ENCODE measurements at regions of chr15 and their contacts with region 1.

Region 1: DNA sequence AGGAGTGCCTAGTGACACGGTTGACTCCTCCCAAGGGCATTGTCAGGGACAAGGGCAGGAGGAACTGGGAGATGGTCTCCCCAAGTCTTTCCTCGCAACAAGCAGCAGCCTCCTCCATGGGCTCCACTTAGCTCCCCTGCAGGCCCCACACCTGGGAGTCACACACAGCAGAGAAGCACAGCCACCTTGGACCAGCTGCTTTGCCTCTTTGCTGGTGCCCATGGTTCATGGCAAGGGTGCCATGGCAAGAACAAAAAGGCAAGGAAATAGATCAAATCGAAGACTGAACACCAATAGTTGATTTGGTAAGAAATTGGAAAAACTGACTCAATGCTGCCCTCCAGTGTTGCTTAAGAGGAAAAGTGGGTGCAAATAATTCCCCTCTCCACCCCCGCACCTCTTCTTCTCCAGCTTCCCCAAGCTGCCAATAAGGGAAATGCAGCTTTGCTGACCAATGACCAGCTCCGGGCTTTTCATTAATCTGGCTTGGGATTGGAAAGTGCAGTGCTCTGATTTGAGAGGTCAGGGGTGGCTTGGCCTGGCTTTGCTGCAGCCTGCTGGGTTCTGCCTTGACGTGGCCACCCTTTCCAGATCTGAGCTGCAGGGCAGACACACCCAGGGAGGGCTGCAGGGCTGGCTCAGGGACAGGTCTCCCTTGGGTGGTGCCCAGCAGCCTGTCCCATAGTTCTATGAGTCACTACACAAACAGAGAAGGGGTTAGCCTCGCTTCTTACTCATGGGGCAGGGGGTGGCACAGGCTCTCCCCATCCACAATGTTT is 162.0 kb downstream of the KLF13 start:
- DNase-seq: peak; percentile 88
- H3K4me3 Mint-ChIP-seq: no peak overlapping the region
- H3K27ac Mint-ChIP-seq: peak overlapping the region; percentile 57
- H3K4me1 Mint-ChIP-seq: peaks cover 23% of the 10 kb centered on the region
- H3K27me3 Mint-ChIP-seq: no peaks in the 10 kb centered on the region
- CTCF ChIP-seq: peak; percentile 90

Region 2: GRCh38 chr15:31128919-31129768 is 359.5 kb before region 1 on chr15:
- CTCF ChIA-PET with region 1: interaction called, 20 read pairs
- POLR2A ChIA-PET with region 1: no interaction called
- intact Hi-C with region 1: loop called (anchors 5 kb)
- DNase-seq: peak; percentile 61
- H3K4me3 Mint-ChIP-seq: no peak overlapping the region
- H3K27ac Mint-ChIP-seq: no peak overlapping the region
- H3K4me1 Mint-ChIP-seq: no peaks in the 10 kb centered on the region
- H3K27me3 Mint-ChIP-seq: no peaks in the 10 kb centered on the region
- CTCF ChIP-seq: peak; percentile 92

Region 3: GRCh38 chr15:31215490-31216214 is 273.0 kb before region 1 on chr15:
- CTCF ChIA-PET with region 1: interaction called, 10 read pairs
- POLR2A ChIA-PET with region 1: interaction called, 4 read pairs
- intact Hi-C with region 1: loop called (anchors 1 kb)
- DNase-seq: peak; percentile 94
- H3K4me3 Mint-ChIP-seq: peak overlapping the region; percentile 68
- H3K27ac Mint-ChIP-seq: peak overlapping the region; percentile 57
- H3K4me1 Mint-ChIP-seq: peaks cover 16% of the 10 kb centered on the region
- H3K27me3 Mint-ChIP-seq: no peaks in the 10 kb centered on the region
- CTCF ChIP-seq: peak; percentile 80

Region 4: GRCh38 chr15:31365655-31366127 is 122.9 kb before region 1 on chr15:
- CTCF ChIA-PET with region 1: interaction called, 182 read pairs
- POLR2A ChIA-PET with region 1: interaction called, 39 read pairs
- intact Hi-C with region 1: loop called (anchors 1 kb)
- DNase-seq: peak; percentile 92
- H3K4me3 Mint-ChIP-seq: peak overlapping the region; percentile 76
- H3K27ac Mint-ChIP-seq: peak overlapping the region; percentile 86
- H3K4me1 Mint-ChIP-seq: peaks cover 57% of the 10 kb centered on the region
- H3K27me3 Mint-ChIP-seq: no peaks in the 10 kb centered on the region
- CTCF ChIP-seq: peak; percentile 49

Region 5: GRCh38 chr15:31442203-31443111 is 46.2 kb before region 1 on chr15:
- CTCF ChIA-PET with region 1: interaction called, 116 read pairs
- POLR2A ChIA-PET with region 1: interaction called, 5 read pairs
- intact Hi-C with region 1: loop called (anchors 1 kb)
- DNase-seq: peak; percentile 39
- H3K4me3 Mint-ChIP-seq: no peak overlapping the region
- H3K27ac Mint-ChIP-seq: peak overlapping the region; percentile 50
- H3K4me1 Mint-ChIP-seq: peaks cover 21% of the 10 kb centered on the region
- H3K27me3 Mint-ChIP-seq: no peaks in the 10 kb centered on the region
- CTCF ChIP-seq: peak; percentile 10

Region 6: GRCh38 chr15:31472636-31473384 is 15.8 kb before region 1 on chr15:
- CTCF ChIA-PET with region 1: interaction called, 67 read pairs
- POLR2A ChIA-PET with region 1: no interaction called
- intact Hi-C with region 1: no loop called
- DNase-seq: no peak
- H3K4me3 Mint-ChIP-seq: no peak overlapping the region
- H3K27ac Mint-ChIP-seq: no peak overlapping the region
- H3K4me1 Mint-ChIP-seq: peaks cover 18% of the 10 kb centered on the region
- H3K27me3 Mint-ChIP-seq: no peaks in the 10 kb centered on the region
- CTCF ChIP-seq: no peak